ENCODE measurements at regions of chr9 and their contacts with region 1.

Region 1: GRCh38 chr9:135961277-135961705 is at the start of gene UBAC1:
- DNase-seq: peak; percentile 99
- H3K4me3 ChIP-seq: peak within 1 kb of the TSS; percentile 86 to 99 (median 96)
- H3K27ac ChIP-seq: peak within 1 kb of the TSS; percentile 93 to 95 (median 95)
- H3K4me1 ChIP-seq: peaks cover 27 to 48% (median 36%) of the 10 kb centered on the region in 4 donors
- H3K27me3 ChIP-seq: no peaks in the 10 kb centered on the region
- CTCF ChIP-seq: peak in 2 of 3 experiments; percentile 44 to 57
- EP300 ChIP-seq: no peak
- POLR2A ChIP-seq: no peak
- total RNA-seq, gene UBAC1: 61.6 to 77.2 (median 67.3) TPM

Region 2: GRCh38 chr9:135811801-135812200 is 149.5 kb before region 1 on chr9:
- intact Hi-C with region 1: no loop called
- DNase-seq: no peak
- H3K4me3 ChIP-seq: no peak overlapping the region
- H3K27ac ChIP-seq: no peak overlapping the region
- H3K4me1 ChIP-seq: no peaks in the 10 kb centered on the region
- H3K27me3 ChIP-seq: no peaks in the 10 kb centered on the region
- CTCF ChIP-seq: no peak
- EP300 ChIP-seq: no peak
- POLR2A ChIP-seq: no peak

Region 3: GRCh38 chr9:135907431-135908092 is 53.7 kb before region 1 on chr9 and contains the start of gene CAMSAP1:
- intact Hi-C with region 1: loop called (anchors 2 kb)
- DNase-seq: peak; percentile 97
- H3K4me3 ChIP-seq: peak within 1 kb of the TSS; percentile 83 to 93 (median 92)
- H3K27ac ChIP-seq: peak within 1 kb of the TSS; percentile 78 to 86 (median 82)
- H3K4me1 ChIP-seq: peaks cover 41 to 61% (median 47%) of the 10 kb centered on the region in 4 donors
- H3K27me3 ChIP-seq: no peaks in the 10 kb centered on the region
- CTCF ChIP-seq: no peak
- EP300 ChIP-seq: no peak
- POLR2A ChIP-seq: peak; percentile 45
- total RNA-seq, gene CAMSAP1: 21.0 to 52.7 (median 30.5) TPM

Measured in esophagus muscularis mucosa (tissue), 4 donors.